Common myeloid progenitor, CD34-positive (primary cell): ENCODE measurements at regions of chr7 and their contacts with region 1.

Region 1: GRCh38 chr7:107462740-107463444 is 7.0 kb upstream of the GPR22 start:
- DNase-seq: peak; percentile 59 to 81 (median 74)
- H3K4me3 ChIP-seq: no peak overlapping the region
- H3K27ac ChIP-seq: no peak overlapping the region
- H3K4me1 ChIP-seq: peaks cover 0 to 8% (median 0%) of the 10 kb centered on the region in 4 experiments
- H3K27me3 ChIP-seq: no peaks in the 10 kb centered on the region

Region 2: GRCh38 chr7:107480932-107481331 is 18.0 kb after region 1 on chr7:
- CTCF ChIA-PET with region 1: interaction called, 13 read pairs
- POLR2A ChIA-PET with region 1: no interaction called
- DNase-seq: no peak
- H3K4me3 ChIP-seq: no peak overlapping the region
- H3K27ac ChIP-seq: no peak overlapping the region
- H3K4me1 ChIP-seq: no peaks in the 10 kb centered on the region
- H3K27me3 ChIP-seq: no peaks in the 10 kb centered on the region

Region 3: DNA sequence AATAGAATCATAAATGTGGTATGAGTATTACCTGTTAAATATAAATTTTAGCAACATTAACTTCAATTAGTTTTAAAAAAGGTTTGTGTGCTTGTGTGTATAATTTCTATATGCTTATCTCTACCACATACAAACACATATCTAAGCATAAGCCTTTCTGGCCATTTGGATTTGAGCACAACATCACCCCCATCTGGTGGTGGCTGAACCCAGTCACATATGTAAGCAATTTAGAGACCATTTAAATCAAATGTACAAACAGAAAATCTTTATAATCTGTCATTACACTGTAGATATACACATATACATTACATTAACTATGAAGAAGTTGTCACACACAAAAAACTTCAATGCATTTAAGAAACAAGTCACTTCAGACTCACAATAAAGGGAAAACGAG is 38.7 kb after region 1 on chr7:
- CTCF ChIA-PET with region 1: interaction called, 25 read pairs
- POLR2A ChIA-PET with region 1: no interaction called
- DNase-seq: peak; percentile 64 to 79 (median 77)
- H3K4me3 ChIP-seq: no peak overlapping the region
- H3K27ac ChIP-seq: no peak overlapping the region
- H3K4me1 ChIP-seq: peaks cover 0 to 4% (median 3%) of the 10 kb centered on the region in 4 experiments
- H3K27me3 ChIP-seq: no peaks in the 10 kb centered on the region

Region 4: GRCh38 chr7:107543338-107543993 is 80.6 kb after region 1 on chr7:
- CTCF ChIA-PET with region 1: no interaction called
- POLR2A ChIA-PET with region 1: no interaction called
- DNase-seq: no peak
- H3K4me3 ChIP-seq: no peak overlapping the region
- H3K27ac ChIP-seq: peak overlapping the region in 1 of 2 experiments; percentile 14
- H3K4me1 ChIP-seq: no peaks in the 10 kb centered on the region
- H3K27me3 ChIP-seq: no peaks in the 10 kb centered on the region

Region 5: DNA sequence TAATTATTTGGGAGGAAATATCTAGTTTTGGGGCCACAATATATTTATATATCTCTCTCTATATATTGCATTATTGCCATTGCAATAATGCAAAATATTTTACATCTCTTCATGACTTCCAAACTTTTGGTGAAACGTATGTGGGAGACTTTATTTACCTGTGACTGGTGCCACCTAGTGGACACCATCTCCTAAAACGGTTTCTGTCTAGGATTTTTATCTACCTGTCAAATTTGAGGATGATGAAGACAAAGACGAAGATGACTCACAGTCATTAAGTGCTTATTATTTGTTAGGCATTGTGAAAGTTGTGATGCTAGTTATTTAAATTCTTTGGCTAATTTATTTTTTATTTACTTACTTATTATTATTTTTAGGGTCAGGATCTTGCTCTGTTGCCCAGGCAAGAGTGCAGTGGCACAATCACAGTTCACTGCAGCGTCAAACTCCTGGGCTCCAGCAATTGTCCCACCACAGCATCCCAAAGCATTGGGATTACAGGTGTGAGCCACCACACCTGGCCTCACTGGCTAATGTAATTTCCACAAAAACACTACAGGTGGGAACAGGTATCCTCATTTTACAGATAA is 262.4 kb after region 1 on chr7:
- CTCF ChIA-PET with region 1: interaction called, 18 read pairs
- POLR2A ChIA-PET with region 1: no interaction called
- DNase-seq: peak; percentile 59 to 73 (median 68)
- H3K4me3 ChIP-seq: no peak overlapping the region
- H3K27ac ChIP-seq: no peak overlapping the region
- H3K4me1 ChIP-seq: no peaks in the 10 kb centered on the region
- H3K27me3 ChIP-seq: peaks cover 0 to 2% (median 0%) of the 10 kb centered on the region in 5 experiments

Region 6: GRCh38 chr7:107879400-107880035 is 416.6 kb after region 1 on chr7:
- CTCF ChIA-PET with region 1: interaction called, 19 read pairs
- POLR2A ChIA-PET with region 1: no interaction called
- DNase-seq: peak; percentile 78 to 79 (median 78)
- H3K4me3 ChIP-seq: no peak overlapping the region
- H3K27ac ChIP-seq: no peak overlapping the region
- H3K4me1 ChIP-seq: peaks cover 4 to 28% (median 18%) of the 10 kb centered on the region in 4 experiments
- H3K27me3 ChIP-seq: no peaks in the 10 kb centered on the region